Activated B cell treated with CpG ODN at 0.5 μM for 24 hours (primary cell): ENCODE measurements at regions of chr10 and their contacts with region 1.

Region 1: DNA sequence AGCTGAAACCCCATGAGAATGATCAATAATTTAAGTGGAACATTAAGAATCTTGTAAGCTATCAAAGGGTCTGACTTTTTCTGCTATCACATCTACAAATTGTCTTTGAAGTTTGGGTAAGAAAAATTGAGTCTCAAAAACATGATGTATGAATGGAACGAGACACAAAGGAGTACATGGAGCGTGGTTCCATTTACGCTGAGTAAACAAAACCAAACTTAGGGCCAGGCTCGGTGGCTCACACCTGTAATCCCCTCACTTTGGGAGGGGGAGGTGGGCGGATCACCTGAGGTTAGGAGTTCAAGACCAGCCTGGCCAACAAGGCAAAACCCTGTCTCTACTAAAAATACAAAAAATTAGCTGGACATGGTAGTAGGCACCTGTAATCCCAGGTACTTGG is 24.3 kb downstream of the SMC3 start:
- DNase-seq: no peak
- ATAC-seq: no peak
- H3K4me3 Mint-ChIP-seq: no peak overlapping the region
- H3K27ac Mint-ChIP-seq: no peak overlapping the region
- H3K4me1 Mint-ChIP-seq: peaks cover 2% of the 10 kb centered on the region
- H3K27me3 Mint-ChIP-seq: no peaks in the 10 kb centered on the region
- CTCF ChIP-seq: no peak

Region 2: DNA sequence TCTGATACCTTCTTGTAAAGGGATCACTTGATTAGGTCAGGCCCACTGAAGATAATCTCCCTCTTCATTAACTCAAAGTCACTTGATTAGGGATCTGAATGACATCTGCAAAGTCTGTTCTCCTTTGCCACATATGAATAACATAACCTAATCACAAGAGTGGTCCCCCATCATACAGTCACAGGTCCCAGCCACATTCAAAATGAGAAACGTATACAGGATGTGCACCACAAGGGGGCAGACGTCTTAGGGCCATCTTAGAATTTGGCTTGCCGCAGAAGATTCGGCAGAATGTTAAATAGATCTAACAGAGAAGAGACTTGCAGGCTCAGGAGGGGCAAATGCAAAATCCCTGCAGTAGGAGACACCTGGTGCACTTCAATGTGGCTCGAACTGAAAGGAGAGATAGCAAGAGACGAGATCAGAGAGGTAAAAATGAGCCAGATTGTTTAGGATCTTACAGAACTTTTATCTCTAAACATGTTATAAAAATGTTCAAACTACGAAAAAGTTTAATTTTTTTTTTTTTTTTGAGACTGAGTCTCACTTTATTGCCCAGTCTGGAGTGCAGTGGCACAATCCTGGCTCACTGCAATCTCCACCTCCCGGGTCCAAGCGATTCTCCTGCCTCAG is 34.7 kb before region 1 on chr10:
- CTCF ChIA-PET with region 1: no interaction called
- POLR2A ChIA-PET with region 1: no interaction called
- intact Hi-C with region 1: loop called (anchors 5 kb)
- DNase-seq: no peak
- ATAC-seq: peak; percentile 79
- H3K4me3 Mint-ChIP-seq: no peak overlapping the region
- H3K27ac Mint-ChIP-seq: no peak overlapping the region
- H3K4me1 Mint-ChIP-seq: peaks cover 2% of the 10 kb centered on the region
- H3K27me3 Mint-ChIP-seq: peaks cover 15% of the 10 kb centered on the region
- CTCF ChIP-seq: no peak

Region 3: DNA sequence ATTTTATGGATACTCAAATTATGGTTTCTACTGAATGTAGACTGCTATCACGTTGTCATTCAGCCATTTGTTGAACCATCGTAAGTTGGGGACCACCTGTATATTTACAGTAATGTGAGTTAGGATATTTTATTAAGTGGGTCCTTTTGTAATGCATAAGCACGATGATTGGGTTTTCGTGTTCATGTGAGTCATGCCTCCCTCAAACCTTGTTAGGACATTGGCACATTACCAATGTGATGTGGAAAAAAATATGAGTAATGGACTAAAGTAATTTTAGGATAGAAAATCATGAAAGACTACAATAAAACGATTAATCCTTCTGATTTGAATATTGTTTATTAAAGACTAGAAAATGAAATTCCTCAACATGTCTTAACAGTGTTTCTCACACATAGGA is 15.5 kb before region 1 on chr10:
- CTCF ChIA-PET with region 1: no interaction called
- POLR2A ChIA-PET with region 1: no interaction called
- intact Hi-C with region 1: loop called (anchors 2 kb)
- DNase-seq: no peak
- ATAC-seq: no peak
- H3K4me3 Mint-ChIP-seq: no peak overlapping the region
- H3K27ac Mint-ChIP-seq: no peak overlapping the region
- H3K4me1 Mint-ChIP-seq: peaks cover 18% of the 10 kb centered on the region
- H3K27me3 Mint-ChIP-seq: no peaks in the 10 kb centered on the region
- CTCF ChIP-seq: no peak

Region 4: GRCh38 chr10:111057006-111057405 is 465.2 kb after region 1 on chr10:
- CTCF ChIA-PET with region 1: no interaction called
- POLR2A ChIA-PET with region 1: no interaction called
- intact Hi-C with region 1: no loop called
- DNase-seq: no peak
- ATAC-seq: no peak
- H3K4me3 Mint-ChIP-seq: no peak overlapping the region
- H3K27ac Mint-ChIP-seq: no peak overlapping the region
- H3K4me1 Mint-ChIP-seq: no peaks in the 10 kb centered on the region
- H3K27me3 Mint-ChIP-seq: peaks cover 30% of the 10 kb centered on the region
- CTCF ChIP-seq: no peak